ENCODE measurements at regions of chr7 and their contacts with region 1.

Region 1: GRCh38 chr7:139359366-139360209 is at the start of gene LUC7L2:
- DNase-seq: peak; percentile 99
- H3K4me3 Mint-ChIP-seq: peak within 1 kb of the TSS; percentile 94
- H3K27ac Mint-ChIP-seq: peak within 1 kb of the TSS; percentile 99
- H3K4me1 Mint-ChIP-seq: peaks cover 32% of the 10 kb centered on the region
- H3K27me3 Mint-ChIP-seq: no peaks in the 10 kb centered on the region
- total RNA-seq, gene LUC7L2: 150 and 151 TPM in 2 replicates

Region 2: GRCh38 chr7:139340037-139340807 is 19.4 kb before region 1 on chr7:
- intact Hi-C with region 1: loop called (anchors 1 kb)
- DNase-seq: peak; percentile 97
- H3K4me3 Mint-ChIP-seq: peak overlapping the region; percentile 97
- H3K27ac Mint-ChIP-seq: peak overlapping the region; percentile 100
- H3K4me1 Mint-ChIP-seq: peaks cover 21% of the 10 kb centered on the region
- H3K27me3 Mint-ChIP-seq: peaks cover 3% of the 10 kb centered on the region